ENCODE measurements at regions of chr1 and their contacts with region 1.

Region 1: GRCh38 chr1:19091196-19091953 is 118.7 kb downstream of the UBR4 start:
- DNase-seq: peak in 2 of 4 donors; percentile 48 to 65
- ATAC-seq: no peak
- H3K4me3 ChIP-seq: no peak overlapping the region
- H3K27ac ChIP-seq: peak overlapping the region; percentile 2 to 19
- H3K4me1 ChIP-seq: peaks cover 0 to 13% of the 10 kb centered on the region in 2 donors
- H3K27me3 ChIP-seq: no peaks in the 10 kb centered on the region
- CTCF ChIP-seq: no peak

Region 2: GRCh38 chr1:18907021-18907916 is 184.1 kb before region 1 on chr1:
- intact Hi-C with region 1: loop called in 1 of 2 experiments (anchors 5 kb)
- DNase-seq: peak; percentile 66 to 91 (median 86)
- ATAC-seq: peak; percentile 19
- H3K4me3 ChIP-seq: peak overlapping the region in 1 of 2 donors; percentile 6
- H3K27ac ChIP-seq: peak overlapping the region; percentile 37 to 88
- H3K4me1 ChIP-seq: peaks cover 9 to 35% of the 10 kb centered on the region in 2 donors
- H3K27me3 ChIP-seq: no peaks in the 10 kb centered on the region
- CTCF ChIP-seq: peak; percentile 82 to 84

Region 3: DNA sequence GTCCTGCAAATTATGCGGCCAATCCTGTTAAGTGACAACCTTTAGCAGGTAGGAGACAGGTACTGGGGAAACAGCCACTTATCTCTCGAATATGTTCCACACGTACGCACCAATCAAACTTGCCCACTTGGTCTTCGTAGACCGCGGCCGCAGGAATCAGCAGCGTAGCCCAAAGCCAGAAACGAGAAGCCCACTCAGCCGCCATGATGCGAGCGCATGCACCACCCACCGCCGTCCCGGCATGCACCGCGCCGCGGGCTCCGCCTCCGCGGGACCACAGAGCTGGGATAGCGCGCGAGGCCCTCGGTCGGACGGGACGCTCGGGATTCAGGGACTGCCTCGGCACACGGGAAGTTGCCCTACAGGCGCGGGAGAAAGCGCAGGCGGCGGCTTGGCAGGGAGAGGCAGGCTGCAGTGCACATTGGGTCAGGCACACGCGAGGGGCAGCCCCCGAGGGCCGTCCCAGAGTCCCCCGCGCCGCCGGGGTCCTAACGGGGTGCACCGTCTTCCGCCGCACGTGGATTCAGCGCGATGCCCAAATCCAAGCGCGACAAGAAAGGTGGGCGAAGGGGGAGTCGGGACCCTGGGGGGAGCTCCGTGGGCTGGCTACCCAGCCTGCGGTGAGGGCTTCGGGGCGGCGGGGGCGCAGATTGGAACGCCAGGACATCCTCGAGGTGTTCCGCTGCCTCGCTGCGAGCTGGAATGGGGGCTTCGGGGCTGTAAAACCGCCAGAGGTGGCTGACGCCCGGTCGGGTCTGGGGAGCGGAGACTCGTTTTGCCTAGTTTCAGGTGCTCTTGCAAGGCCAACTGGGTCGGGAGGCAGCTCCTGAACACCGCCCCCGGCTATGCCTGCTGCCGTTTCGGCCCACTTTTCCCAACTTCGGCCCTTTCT is 160.2 kb after region 1 on chr1 and contains the starts of genes EMC1 and MRTO4:
- intact Hi-C with region 1: no loop called
- DNase-seq: peak; percentile 87 to 97 (median 90)
- ATAC-seq: peak; percentile 99
- H3K4me3 ChIP-seq: peak within 1 kb of the TSS; percentile 89 to 94
- H3K27ac ChIP-seq: peak within 1 kb of the TSS; percentile 95 to 97
- H3K4me1 ChIP-seq: peaks cover 20 to 44% of the 10 kb centered on the region in 2 donors
- H3K27me3 ChIP-seq: no peaks in the 10 kb centered on the region
- CTCF ChIP-seq: no peak
- polyA plus RNA-seq, gene EMC1: 48.6 to 55.5 (median 52.4) TPM
- polyA plus RNA-seq, gene MRTO4: 27.9 to 33.6 (median 30.9) TPM

Measured in left lung (tissue), 14 donors.